Breast epithelium (tissue), 4 donors: ENCODE measurements at regions of chr4 and their contacts with region 1.

Region 1: GRCh38 chr4:150297861-150298474 is 219.7 kb downstream of the DCLK2 start:
- DNase-seq: no peak
- H3K4me3 ChIP-seq: no peak overlapping the region
- H3K27ac ChIP-seq: no peak overlapping the region
- H3K4me1 ChIP-seq: no peaks in the 10 kb centered on the region
- H3K27me3 ChIP-seq: no peaks in the 10 kb centered on the region
- CTCF ChIP-seq: peak in 1 of 3 donors; percentile 45
- POLR2A ChIP-seq: no peak

Region 2: GRCh38 chr4:151052785-151053184 is 754.8 kb after region 1 on chr4:
- intact Hi-C with region 1: loop called (anchors 10 kb)
- DNase-seq: no peak
- H3K4me3 ChIP-seq: no peak overlapping the region
- H3K27ac ChIP-seq: no peak overlapping the region
- H3K4me1 ChIP-seq: no peaks in the 10 kb centered on the region
- H3K27me3 ChIP-seq: no peaks in the 10 kb centered on the region
- CTCF ChIP-seq: no peak
- POLR2A ChIP-seq: no peak